Activated CD4-positive, alpha-beta T cell treated with anti-CD3 and anti-CD28 coated beads, Interleukin-2, amount 10 ng/mL, durations not matched to agents 7 days and 5 days (primary cell): ENCODE measurements at regions of chr10 and their contacts with region 1.

Region 1: DNA sequence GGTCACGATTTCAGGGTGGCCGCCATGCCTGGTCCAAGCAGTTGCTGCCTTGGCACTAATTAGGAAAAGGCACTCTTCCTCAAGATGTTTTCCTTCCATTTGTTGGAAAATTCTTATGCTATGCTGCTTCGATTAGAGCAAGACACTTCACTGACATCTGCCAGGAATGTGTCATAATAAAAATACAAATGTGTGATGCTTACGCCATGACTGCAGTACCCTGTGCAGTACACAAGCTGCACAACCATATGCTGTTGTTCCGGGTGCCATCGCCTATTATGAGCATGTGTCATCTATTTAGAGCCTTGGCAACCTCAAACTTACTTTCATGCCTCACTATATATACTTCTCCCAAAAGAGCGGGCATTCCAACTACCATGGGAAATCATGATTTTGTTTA is 14.9 kb upstream of the MPP7 start:
- DNase-seq: no peak
- H3K4me3 Mint-ChIP-seq: no peak overlapping the region
- H3K27ac Mint-ChIP-seq: no peak overlapping the region
- H3K4me1 Mint-ChIP-seq: peaks cover 1% of the 10 kb centered on the region
- H3K27me3 Mint-ChIP-seq: no peaks in the 10 kb centered on the region

Region 2: GRCh38 chr10:28302638-28303488 is 14.9 kb before region 1 on chr10 and contains the start of gene MPP7:
- CTCF ChIA-PET with region 1: interaction called, 17 read pairs
- POLR2A ChIA-PET with region 1: no interaction called
- DNase-seq: peak; percentile 95
- H3K4me3 Mint-ChIP-seq: peak within 1 kb of the TSS; percentile 93
- H3K27ac Mint-ChIP-seq: peak within 1 kb of the TSS; percentile 70
- H3K4me1 Mint-ChIP-seq: peaks cover 57% of the 10 kb centered on the region
- H3K27me3 Mint-ChIP-seq: peaks cover 30% of the 10 kb centered on the region
- total RNA-seq, gene MPP7: 18.7 to 20.2 TPM